ENCODE measurements at regions of chr12 and their contacts with region 1.

Region 1: GRCh38 chr12:109844983-109845823 is 12.0 kb upstream of the TRPV4 start:
- DNase-seq: peak; percentile 93
- H3K4me3 Mint-ChIP-seq: peak overlapping the region; percentile 31
- H3K27ac Mint-ChIP-seq: no peak overlapping the region
- H3K4me1 Mint-ChIP-seq: peaks cover 4% of the 10 kb centered on the region
- H3K27me3 Mint-ChIP-seq: no peaks in the 10 kb centered on the region

Region 2: DNA sequence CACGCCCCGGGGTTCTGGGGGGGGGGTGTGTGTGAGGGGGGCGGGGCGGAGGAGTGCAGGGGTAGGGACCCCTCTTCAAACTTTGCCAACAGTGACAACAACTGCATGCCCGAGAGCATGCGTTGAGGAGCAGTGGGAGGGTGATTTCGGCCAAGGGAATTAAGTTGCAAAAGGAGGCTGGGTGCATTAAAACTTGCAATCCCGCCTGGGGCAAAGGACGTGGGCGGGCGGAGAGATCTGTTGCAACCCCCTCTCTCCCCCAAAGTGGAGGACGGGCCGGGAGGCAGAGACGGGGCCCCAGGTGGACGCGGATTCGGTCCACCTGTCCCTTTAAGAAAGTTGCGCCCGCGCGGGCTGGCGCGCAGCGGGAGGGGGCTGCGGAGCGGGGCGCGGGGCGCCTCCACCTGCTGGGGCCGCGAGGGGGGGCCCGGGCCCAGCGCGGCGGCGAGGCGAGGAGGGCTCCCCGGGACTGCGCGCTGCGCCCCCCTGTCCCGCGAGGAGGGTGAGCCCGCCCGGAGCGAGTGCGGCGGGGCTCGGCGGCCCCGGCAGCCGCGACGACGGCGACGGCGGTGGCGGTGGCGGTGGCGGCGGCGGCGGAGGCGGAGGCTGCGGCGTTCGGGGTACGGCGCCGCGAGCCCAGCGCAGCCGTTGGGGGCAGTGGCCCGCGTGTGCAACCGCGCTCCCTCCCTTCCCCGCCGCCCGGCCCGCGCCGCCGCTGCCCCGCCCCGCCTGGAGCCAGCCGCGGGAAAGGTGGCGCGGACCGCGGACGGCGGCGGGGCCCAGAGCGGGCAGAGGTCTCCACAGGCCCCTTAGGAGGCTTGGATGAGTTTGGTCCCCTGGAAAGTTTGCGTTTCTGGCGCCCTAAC is 535.6 kb before region 1 on chr12:
- CTCF ChIA-PET with region 1: no interaction called
- POLR2A ChIA-PET with region 1: no interaction called
- intact Hi-C with region 1: no loop called
- DNase-seq: no peak
- H3K4me3 Mint-ChIP-seq: peak overlapping the region; percentile 69
- H3K27ac Mint-ChIP-seq: no peak overlapping the region
- H3K4me1 Mint-ChIP-seq: peaks cover 10% of the 10 kb centered on the region
- H3K27me3 Mint-ChIP-seq: peaks cover 56% of the 10 kb centered on the region

Region 3: DNA sequence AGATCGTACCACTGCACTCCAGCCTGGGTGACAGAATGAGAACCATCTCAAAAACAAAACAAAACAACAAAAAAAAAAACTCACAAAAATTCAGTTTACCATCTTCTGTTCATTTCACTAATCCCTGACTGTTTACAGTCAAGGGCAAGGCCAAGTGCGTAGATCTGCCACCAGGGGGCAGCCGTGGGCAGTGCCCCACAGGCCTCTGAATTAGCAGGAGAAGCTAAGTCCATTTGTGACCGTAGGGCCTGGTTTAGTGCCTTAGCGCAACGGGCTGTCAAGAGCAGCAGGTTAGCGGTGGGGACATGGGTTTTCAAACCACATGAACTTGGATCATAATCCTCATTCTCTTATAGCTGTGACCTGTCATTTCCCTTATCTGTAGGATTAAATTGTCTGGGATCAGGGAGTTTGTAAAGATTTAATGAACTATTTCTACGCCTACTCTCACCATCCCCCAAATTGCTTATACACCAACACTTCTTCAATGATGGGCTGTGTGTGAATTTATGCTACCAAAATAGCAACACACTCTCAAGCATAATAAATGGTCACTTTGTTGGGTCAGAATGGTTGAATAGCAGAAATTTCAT is 417.1 kb before region 1 on chr12:
- CTCF ChIA-PET with region 1: interaction called, 10 read pairs
- POLR2A ChIA-PET with region 1: no interaction called
- intact Hi-C with region 1: no loop called
- DNase-seq: peak; percentile 80
- H3K4me3 Mint-ChIP-seq: no peak overlapping the region
- H3K27ac Mint-ChIP-seq: no peak overlapping the region
- H3K4me1 Mint-ChIP-seq: peaks cover 1% of the 10 kb centered on the region
- H3K27me3 Mint-ChIP-seq: peaks cover 2% of the 10 kb centered on the region

Region 4: GRCh38 chr12:109804820-109805761 is 40.1 kb before region 1 on chr12:
- CTCF ChIA-PET with region 1: interaction called, 92 read pairs
- POLR2A ChIA-PET with region 1: interaction called, 3 read pairs
- intact Hi-C with region 1: loop called (anchors 1 kb)
- DNase-seq: peak; percentile 77
- H3K4me3 Mint-ChIP-seq: no peak overlapping the region
- H3K27ac Mint-ChIP-seq: no peak overlapping the region
- H3K4me1 Mint-ChIP-seq: no peaks in the 10 kb centered on the region
- H3K27me3 Mint-ChIP-seq: no peaks in the 10 kb centered on the region

Region 5: DNA sequence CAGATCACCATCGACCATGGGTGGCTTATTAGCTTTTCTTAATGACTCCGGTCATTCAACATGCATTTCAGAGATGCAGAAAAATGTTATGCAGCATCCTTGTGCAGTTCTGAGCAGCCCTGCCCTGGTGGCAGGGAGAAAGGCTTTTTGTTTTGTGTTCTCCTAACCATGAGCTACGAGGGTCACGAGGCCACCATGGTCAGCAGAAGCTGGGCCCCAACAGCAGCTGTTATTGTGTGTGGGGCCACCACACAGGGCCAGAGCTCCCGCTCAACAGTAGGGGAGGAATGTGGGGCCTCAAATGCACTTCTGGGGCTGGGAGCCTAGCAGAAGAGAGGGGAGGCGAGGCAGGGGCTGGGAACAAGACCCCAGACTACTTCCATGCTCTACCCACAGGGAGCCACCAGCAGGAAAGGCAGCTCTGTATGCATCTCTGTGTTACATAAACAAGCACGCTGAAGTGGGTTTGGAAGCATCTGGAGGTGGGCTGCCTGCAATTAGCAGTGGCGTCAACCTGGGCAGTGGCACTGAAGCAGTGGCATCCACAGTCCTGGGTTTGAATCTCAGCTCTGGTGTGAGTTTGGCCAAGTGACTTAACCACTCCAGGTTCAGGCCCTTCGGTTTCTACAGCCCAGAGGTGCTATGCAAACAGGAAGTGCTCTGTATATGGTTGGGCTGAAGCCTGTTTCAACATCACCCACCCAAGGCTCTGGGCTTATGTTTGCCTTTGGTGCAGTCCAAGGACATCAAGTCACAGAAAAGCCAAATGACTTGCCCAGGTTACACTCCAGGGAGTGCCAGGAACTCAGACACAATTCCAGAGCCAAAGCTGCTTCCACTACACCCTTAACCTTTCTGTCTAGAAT is 18.9 kb after region 1 on chr12:
- CTCF ChIA-PET with region 1: interaction called, 83 read pairs
- POLR2A ChIA-PET with region 1: no interaction called
- intact Hi-C with region 1: no loop called
- DNase-seq: no peak
- H3K4me3 Mint-ChIP-seq: no peak overlapping the region
- H3K27ac Mint-ChIP-seq: no peak overlapping the region
- H3K4me1 Mint-ChIP-seq: peaks cover 17% of the 10 kb centered on the region
- H3K27me3 Mint-ChIP-seq: no peaks in the 10 kb centered on the region

Region 6: DNA sequence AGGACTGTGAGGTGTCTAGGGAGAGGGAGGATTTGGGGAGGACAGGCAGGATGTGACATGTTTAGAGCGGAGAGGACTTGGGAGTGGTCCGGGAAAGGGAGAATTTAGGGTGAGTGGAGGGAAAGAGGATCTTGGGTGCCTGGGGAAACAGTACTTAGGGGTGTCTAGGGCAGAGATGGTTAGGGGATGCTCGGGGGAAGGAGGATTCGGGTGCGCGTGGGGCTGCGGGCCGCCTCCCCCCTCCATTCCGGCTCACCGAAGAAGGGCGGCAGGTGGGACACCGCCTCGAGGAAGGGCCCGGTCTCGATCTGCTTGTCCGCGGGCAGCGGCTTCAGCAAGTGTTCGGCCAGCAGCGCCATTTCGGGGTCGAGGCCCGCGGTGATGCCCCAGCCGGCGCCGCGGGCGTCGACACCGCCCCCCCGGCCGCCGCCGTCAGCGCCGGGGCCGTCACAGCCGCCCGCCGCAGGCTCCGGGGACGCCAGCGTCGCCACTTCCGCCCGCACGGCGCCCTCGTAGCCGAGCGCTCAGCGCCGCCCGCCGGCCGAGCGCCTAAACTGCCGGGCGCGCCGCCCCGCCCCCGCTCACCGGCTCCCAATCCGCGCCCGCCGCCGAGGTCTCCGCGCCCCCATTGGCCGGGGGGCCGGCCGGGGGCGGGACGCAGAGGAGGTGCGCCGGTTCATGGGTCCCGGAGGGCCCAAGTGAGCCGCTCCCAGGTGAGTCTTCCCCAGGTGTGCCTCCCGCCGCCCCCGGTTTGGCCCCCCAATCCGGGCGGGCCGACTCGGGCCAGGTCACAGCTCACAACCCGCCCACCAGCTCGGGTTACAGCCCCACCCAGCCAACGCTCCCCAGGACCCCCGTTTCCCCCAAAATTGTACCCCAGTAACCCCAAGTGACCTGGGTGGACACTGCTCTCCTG is 35.1 kb after region 1 on chr12 and contains the start of gene GLTP:
- CTCF ChIA-PET with region 1: interaction called, 10 read pairs
- POLR2A ChIA-PET with region 1: no interaction called
- intact Hi-C with region 1: no loop called
- DNase-seq: peak; percentile 91
- H3K4me3 Mint-ChIP-seq: peak within 1 kb of the TSS; percentile 94
- H3K27ac Mint-ChIP-seq: peak within 1 kb of the TSS; percentile 79
- H3K4me1 Mint-ChIP-seq: peaks cover 45% of the 10 kb centered on the region
- H3K27me3 Mint-ChIP-seq: no peaks in the 10 kb centered on the region
- total RNA-seq, gene GLTP: 20.9 to 21.1 TPM

Region 7: GRCh38 chr12:110073049-110073831 is 228.0 kb after region 1 on chr12:
- CTCF ChIA-PET with region 1: no interaction called
- POLR2A ChIA-PET with region 1: no interaction called
- intact Hi-C with region 1: no loop called
- DNase-seq: peak; percentile 59
- H3K4me3 Mint-ChIP-seq: peak overlapping the region; percentile 83
- H3K27ac Mint-ChIP-seq: peak overlapping the region; percentile 76
- H3K4me1 Mint-ChIP-seq: peaks cover 42% of the 10 kb centered on the region
- H3K27me3 Mint-ChIP-seq: no peaks in the 10 kb centered on the region

Measured in activated CD4-positive, alpha-beta memory T cell treated with anti-CD3 and anti-CD28 coated beads for 36 hours (primary cell).